BJ (cell line): ENCODE measurements at regions of chr12 and their contacts with region 1.

Region 1: GRCh38 chr12:121793838-121794533 is 498 bp upstream of the RHOF start:
- DNase-seq: no peak
- H3K4me3 ChIP-seq: peak overlapping the region; percentile 47
- H3K27me3 ChIP-seq: no peaks in the 10 kb centered on the region
- CTCF ChIP-seq: peak; percentile 100

Region 2: GRCh38 chr12:121712461-121713256 is 81.3 kb before region 1 on chr12 and contains the start of gene TMEM120B:
- CTCF ChIA-PET with region 1: interaction called, 42 read pairs
- POLR2A ChIA-PET with region 1: no interaction called
- DNase-seq: no peak
- H3K4me3 ChIP-seq: peak within 1 kb of the TSS; percentile 100
- H3K27me3 ChIP-seq: no peaks in the 10 kb centered on the region
- CTCF ChIP-seq: no peak; the same call in 1 of the 2 replicates
- polyA plus RNA-seq, gene TMEM120B: 7.3 and 11.4 TPM in 2 replicates

Region 3: GRCh38 chr12:121741743-121742142 is 52.2 kb before region 1 on chr12:
- CTCF ChIA-PET with region 1: no interaction called
- POLR2A ChIA-PET with region 1: no interaction called
- DNase-seq: no peak
- H3K4me3 ChIP-seq: no peak overlapping the region
- H3K27me3 ChIP-seq: no peaks in the 10 kb centered on the region
- CTCF ChIP-seq: no peak

Region 4: GRCh38 chr12:121765573-121765972 is 28.4 kb before region 1 on chr12:
- CTCF ChIA-PET with region 1: interaction called, 17 read pairs
- POLR2A ChIA-PET with region 1: no interaction called
- DNase-seq: peak; percentile 70
- H3K4me3 ChIP-seq: no peak overlapping the region
- H3K27me3 ChIP-seq: no peaks in the 10 kb centered on the region
- CTCF ChIP-seq: no peak

Region 5: GRCh38 chr12:121816930-121817647 is 23.1 kb after region 1 on chr12:
- CTCF ChIA-PET with region 1: interaction called, 467 read pairs
- POLR2A ChIA-PET with region 1: interaction called, 4 read pairs
- DNase-seq: no peak
- H3K4me3 ChIP-seq: no peak overlapping the region
- H3K27me3 ChIP-seq: no peaks in the 10 kb centered on the region
- CTCF ChIP-seq: no peak

Region 6: DNA sequence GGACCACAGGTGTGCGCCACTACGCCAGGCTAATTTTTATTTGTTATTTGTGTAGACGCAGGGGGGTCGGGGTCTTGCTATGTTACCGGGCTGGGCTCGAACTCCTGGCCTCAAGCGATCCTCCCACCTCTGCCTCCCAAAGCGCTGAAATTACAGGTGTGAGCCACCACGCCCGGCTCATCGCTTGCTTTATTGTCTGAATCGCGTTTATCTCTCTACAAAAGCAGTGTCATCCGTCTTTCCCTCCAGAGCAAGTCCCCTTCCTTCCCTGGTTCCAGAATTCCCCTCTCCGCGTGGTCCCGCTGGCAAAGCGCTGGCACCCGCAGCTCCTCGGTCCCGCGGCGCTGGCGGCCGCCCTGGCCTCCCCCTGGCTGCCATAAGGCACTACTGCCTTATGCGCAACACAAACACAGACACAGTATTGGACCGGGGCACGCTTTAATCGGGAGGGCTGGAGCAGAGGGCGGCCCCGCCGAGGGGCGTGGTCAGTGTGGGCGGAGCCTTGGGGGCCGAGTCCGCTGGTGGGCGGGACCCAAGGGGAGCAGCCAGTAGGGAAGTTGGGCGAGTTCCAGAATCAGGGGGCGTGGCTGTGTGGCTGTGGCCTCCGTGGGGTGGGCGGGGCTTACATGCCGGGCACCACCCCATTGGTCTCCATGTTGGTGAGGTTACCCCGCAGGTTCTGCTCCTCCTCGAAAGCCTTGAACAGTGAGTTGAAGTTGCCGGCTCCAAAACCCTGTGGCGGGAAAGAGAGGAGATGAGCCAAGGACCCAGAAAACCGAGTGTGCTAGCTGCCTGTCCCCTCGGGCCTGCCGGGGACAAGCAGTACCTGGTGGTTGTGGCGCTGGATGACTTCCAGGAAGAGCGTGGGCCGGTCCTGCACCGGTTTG is 45.4 kb after region 1 on chr12:
- CTCF ChIA-PET with region 1: interaction called, 27 read pairs
- POLR2A ChIA-PET with region 1: no interaction called
- DNase-seq: peak; percentile 81
- H3K4me3 ChIP-seq: peak overlapping the region; percentile 59
- H3K27me3 ChIP-seq: no peaks in the 10 kb centered on the region
- CTCF ChIP-seq: peak; percentile 65

Region 7: DNA sequence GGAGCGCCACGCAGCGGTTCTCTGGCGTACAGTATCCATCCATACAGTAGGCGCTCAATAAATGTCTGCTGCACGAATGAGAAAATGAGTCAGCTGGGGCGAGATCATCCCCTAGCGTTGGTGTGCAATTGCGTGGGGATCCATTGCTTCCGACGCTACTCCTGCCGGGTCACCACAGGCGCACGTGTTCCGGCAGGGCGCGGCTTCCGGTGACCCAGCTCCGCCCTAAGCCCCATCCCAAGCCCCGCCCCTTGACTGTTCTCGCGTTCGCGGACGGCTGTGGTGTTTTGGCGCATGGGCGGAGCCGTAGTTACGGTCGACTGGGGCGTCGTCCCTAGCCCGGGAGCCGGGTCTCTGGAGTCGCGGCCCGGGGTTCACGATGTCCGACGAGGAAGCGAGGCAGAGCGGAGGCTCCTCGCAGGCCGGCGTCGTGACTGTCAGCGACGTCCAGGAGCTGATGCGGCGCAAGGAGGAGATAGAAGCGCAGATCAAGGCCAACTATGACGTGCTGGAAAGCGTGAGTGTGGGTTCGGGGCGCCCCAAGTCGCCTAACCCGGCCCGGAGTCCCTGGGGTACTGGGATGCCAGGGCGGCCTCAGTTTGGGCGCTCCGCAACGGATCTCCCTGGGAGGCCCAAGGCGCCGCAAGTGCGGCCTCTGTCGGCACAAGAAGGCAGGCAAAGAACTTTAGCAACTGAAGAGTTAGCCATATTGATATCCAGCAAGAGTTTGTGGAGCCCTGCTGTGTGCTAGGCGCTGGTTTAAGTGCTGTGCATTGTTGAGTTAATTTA is 94.7 kb after region 1 on chr12 and contains the start of gene PSMD9:
- CTCF ChIA-PET with region 1: interaction called, 64 read pairs
- POLR2A ChIA-PET with region 1: interaction called, 3 read pairs
- DNase-seq: peak; percentile 85
- H3K4me3 ChIP-seq: peak within 1 kb of the TSS; percentile 77
- H3K27me3 ChIP-seq: no peaks in the 10 kb centered on the region
- CTCF ChIP-seq: peak; percentile 89
- polyA plus RNA-seq, gene PSMD9: 93.2 and 130 TPM in 2 replicates